ENCODE measurements at regions of chr17 and their contacts with region 1.

Region 1: DNA sequence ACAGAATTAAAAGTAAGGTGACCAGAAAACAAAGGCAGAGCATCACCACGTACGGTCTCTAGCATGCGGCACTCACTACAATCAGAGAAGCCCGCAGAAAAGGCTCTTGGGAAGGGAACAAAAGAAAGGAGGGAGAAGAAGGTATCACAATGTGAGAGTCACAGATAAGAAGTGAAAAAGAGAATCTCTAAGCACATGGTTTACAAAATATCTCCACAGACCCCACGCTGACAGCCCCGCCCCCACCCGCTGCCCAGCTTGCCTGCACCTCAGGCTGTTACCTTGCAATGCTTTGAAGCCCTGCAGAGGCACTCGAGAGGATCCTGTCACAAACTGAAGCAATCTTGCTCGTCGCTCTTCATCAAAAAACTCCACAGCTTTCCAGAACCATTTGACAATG is 40.5 kb downstream of the CEP95 start:
- DNase-seq: no peak
- ATAC-seq: no peak
- H3K4me3 ChIP-seq: no peak overlapping the region
- H3K4me3 Mint-ChIP-seq: no peak overlapping the region
- H3K27ac ChIP-seq: no peak overlapping the region
- H3K27ac Mint-ChIP-seq: no peak overlapping the region
- H3K4me1 ChIP-seq: no peaks in the 10 kb centered on the region
- H3K4me1 Mint-ChIP-seq: no peaks in the 10 kb centered on the region
- H3K27me3 ChIP-seq: no peaks in the 10 kb centered on the region
- H3K27me3 Mint-ChIP-seq: no peaks in the 10 kb centered on the region

Region 2: DNA sequence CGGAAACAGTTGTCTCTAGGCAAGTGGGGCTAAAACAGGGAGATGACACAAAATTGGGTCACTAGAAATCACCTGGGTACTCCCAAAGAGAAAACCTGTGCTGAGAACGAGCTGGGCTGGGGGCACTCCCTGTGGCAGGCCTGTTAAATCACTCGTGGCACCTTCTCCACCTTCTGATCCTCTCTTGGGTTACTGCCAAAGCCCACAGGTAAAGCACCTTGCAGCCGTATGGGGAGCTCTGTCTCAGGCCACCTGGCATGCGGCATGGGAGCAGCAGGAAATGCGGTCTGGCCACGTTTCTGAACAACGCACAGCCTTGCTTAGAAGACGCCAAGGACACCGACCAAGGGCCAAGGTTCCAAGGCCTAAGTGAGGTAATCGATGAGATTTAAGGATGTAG is 505.4 kb before region 1 on chr17:
- CTCF ChIA-PET with region 1: no interaction called
- POLR2A ChIA-PET with region 1: interaction called in 1 of 2 experiments, 10 read pairs
- DNase-seq: no peak
- ATAC-seq: peak in 1 of 4 experiments; percentile 60
- H3K4me3 ChIP-seq: no peak overlapping the region
- H3K4me3 Mint-ChIP-seq: no peak overlapping the region
- H3K27ac ChIP-seq: peak overlapping the region; percentile 29
- H3K27ac Mint-ChIP-seq: peak overlapping the region; percentile 2 to 33
- H3K4me1 ChIP-seq: no peaks in the 10 kb centered on the region
- H3K4me1 Mint-ChIP-seq: peaks cover 0 to 20% (median 8%) of the 10 kb centered on the region in 3 donors
- H3K27me3 ChIP-seq: no peaks in the 10 kb centered on the region
- H3K27me3 Mint-ChIP-seq: no peaks in the 10 kb centered on the region

Region 3: GRCh38 chr17:64484380-64484779 is 62.9 kb before region 1 on chr17:
- CTCF ChIA-PET with region 1: interaction called in 1 of 2 experiments, 3 read pairs
- POLR2A ChIA-PET with region 1: interaction called in 1 of 2 experiments, 14 read pairs
- DNase-seq: no peak
- ATAC-seq: peak in 1 of 4 experiments; percentile 37
- H3K4me3 ChIP-seq: no peak overlapping the region
- H3K4me3 Mint-ChIP-seq: no peak overlapping the region
- H3K27ac ChIP-seq: no peak overlapping the region
- H3K27ac Mint-ChIP-seq: peak overlapping the region in 1 of 2 donors; percentile 74
- H3K4me1 ChIP-seq: no peaks in the 10 kb centered on the region
- H3K4me1 Mint-ChIP-seq: peaks cover 12 to 16% (median 15%) of the 10 kb centered on the region in 3 donors
- H3K27me3 ChIP-seq: no peaks in the 10 kb centered on the region
- H3K27me3 Mint-ChIP-seq: no peaks in the 10 kb centered on the region

Region 4: DNA sequence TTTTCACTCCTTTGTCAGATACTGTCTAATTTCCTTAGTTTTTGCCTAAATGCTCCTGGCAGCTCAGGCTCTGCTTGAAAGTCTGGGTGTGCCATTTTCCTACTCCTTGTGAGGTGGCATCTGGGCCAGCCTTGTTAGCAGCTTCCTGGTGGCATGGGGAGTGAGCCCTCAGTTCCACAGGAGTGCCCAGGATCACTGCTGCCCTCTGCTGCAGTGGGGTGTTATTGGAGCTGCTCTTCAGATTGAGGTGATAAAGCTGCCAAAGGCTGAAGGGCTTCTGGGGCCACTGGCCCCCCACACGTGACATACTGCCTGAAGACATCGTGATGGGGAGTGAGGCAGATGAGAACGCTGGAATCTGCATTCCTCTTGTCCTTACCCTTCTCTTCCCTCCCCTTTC is 13.1 kb before region 1 on chr17:
- CTCF ChIA-PET with region 1: no interaction called
- POLR2A ChIA-PET with region 1: interaction called, 3 to 14 read pairs
- DNase-seq: peak in 4 of 35 experiments; percentile 1 to 22 (median 4)
- ATAC-seq: peak in 2 of 4 experiments; percentile 23 to 46
- H3K4me3 ChIP-seq: no peak overlapping the region
- H3K4me3 Mint-ChIP-seq: no peak overlapping the region
- H3K27ac ChIP-seq: no peak overlapping the region
- H3K27ac Mint-ChIP-seq: peak overlapping the region; percentile 13 to 42
- H3K4me1 ChIP-seq: no peaks in the 10 kb centered on the region
- H3K4me1 Mint-ChIP-seq: peaks cover 0 to 6% (median 0%) of the 10 kb centered on the region in 3 donors
- H3K27me3 ChIP-seq: no peaks in the 10 kb centered on the region
- H3K27me3 Mint-ChIP-seq: no peaks in the 10 kb centered on the region

Measured in T-cell (primary cell).